Endothelial cell of umbilical vein (primary cell): ENCODE measurements at regions of chr6 and their contacts with region 1.

Region 1: DNA sequence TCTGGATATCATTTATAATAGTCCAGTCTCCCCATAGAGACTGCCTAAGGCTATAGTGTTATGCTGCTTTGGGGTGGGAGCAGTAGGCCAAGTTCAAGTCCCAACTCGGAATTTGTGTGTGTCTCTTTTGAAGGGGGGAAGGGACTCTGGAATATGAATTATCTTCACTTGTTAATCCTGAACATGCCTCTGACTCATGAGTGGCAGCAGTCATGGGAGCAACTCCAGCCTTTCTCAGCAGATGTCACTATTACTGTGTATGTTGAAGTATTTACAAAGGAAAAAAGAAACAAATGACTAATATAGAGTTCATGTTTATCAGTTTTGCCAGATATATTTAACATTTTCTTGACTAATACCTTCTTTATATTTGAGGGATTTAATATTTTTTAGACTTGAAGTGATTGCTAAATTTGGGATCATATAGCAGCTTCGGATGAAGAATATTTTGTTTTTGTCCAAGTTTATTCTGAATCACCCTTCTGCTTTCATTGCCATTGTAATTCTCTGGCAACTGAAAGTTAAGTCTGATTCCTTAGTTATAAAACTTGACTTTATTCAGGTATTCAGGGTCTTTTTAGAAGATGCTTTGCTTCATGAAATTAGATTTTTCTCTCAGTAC is 23.4 kb downstream of the FAM217A start:
- DNase-seq: peak; percentile 92
- H3K4me3 ChIP-seq: no peak overlapping the region
- H3K27ac ChIP-seq: peak overlapping the region; percentile 41
- H3K4me1 ChIP-seq: peaks cover 22% of the 10 kb centered on the region
- H3K27me3 ChIP-seq: no peaks in the 10 kb centered on the region
- CTCF ChIP-seq: peak; percentile 44 to 59
- POLR2A ChIP-seq: no peak

Region 2: GRCh38 chr6:4125936-4126864 is 70.7 kb after region 1 on chr6:
- CTCF ChIA-PET with region 1: interaction called, 4 read pairs
- POLR2A ChIA-PET with region 1: interaction called, 3 read pairs
- dilution Hi-C with region 1: no loop called
- intact Hi-C with region 1: loop called (anchors 2 kb)
- DNase-seq: peak; percentile 83
- H3K4me3 ChIP-seq: no peak overlapping the region
- H3K27ac ChIP-seq: peak overlapping the region; percentile 54
- H3K4me1 ChIP-seq: peaks cover 50% of the 10 kb centered on the region
- H3K27me3 ChIP-seq: no peaks in the 10 kb centered on the region
- CTCF ChIP-seq: peak; percentile 23 to 28
- POLR2A ChIP-seq: peak; percentile 38